ENCODE measurements at regions of chr6 and their contacts with region 1.

Region 1: GRCh38 chr6:127900935-127901334 is at the start of gene THEMIS:
- DNase-seq: peak; percentile 66 to 73 (median 69)
- H3K4me3 ChIP-seq: peak within 1 kb of the TSS; percentile 66 to 72
- H3K4me3 Mint-ChIP-seq: peak within 1 kb of the TSS; percentile 98 to 100 (median 99)
- H3K27ac ChIP-seq: peak within 1 kb of the TSS; percentile 73
- H3K27ac Mint-ChIP-seq: peak within 1 kb of the TSS; percentile 90 to 98 (median 96)
- H3K4me1 ChIP-seq: peaks cover 68% of the 10 kb centered on the region
- H3K4me1 Mint-ChIP-seq: peaks cover 41 to 70% (median 56%) of the 10 kb centered on the region in 4 donors
- H3K27me3 ChIP-seq: no peaks in the 10 kb centered on the region
- H3K27me3 Mint-ChIP-seq: no peaks in the 10 kb centered on the region
- total RNA-seq, gene THEMIS: 58.1 to 58.7 TPM

Region 2: DNA sequence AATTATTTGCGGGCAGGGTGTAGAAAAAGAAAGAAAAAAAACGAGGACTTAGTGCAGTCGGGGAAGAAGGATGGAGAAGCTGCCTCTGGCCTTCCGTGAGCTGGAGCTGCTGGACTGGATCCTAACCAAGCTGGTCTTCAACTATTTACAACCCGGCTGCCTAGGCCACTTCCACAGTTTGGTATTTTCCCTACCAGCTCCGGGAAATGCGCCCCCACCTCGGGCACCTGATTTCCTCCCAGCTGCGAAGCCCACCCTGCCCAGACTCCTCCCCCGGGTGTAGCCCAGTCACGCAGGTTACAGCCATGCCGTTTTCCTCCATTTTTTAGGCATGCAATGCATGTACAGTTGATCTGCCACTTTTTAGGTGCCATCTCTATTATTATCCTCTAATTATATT is 21.2 kb before region 1 on chr6:
- CTCF ChIA-PET with region 1: no interaction called
- POLR2A ChIA-PET with region 1: interaction called, 12 read pairs
- intact Hi-C with region 1: no loop called
- DNase-seq: no peak
- H3K4me3 ChIP-seq: no peak overlapping the region
- H3K4me3 Mint-ChIP-seq: peak overlapping the region in 7 of 8 donors; percentile 43 to 87 (median 61)
- H3K27ac ChIP-seq: no peak overlapping the region
- H3K27ac Mint-ChIP-seq: peak overlapping the region; percentile 36 to 87 (median 81)
- H3K4me1 ChIP-seq: peaks cover 89% of the 10 kb centered on the region
- H3K4me1 Mint-ChIP-seq: peaks cover 52 to 77% (median 66%) of the 10 kb centered on the region in 4 donors
- H3K27me3 ChIP-seq: no peaks in the 10 kb centered on the region
- H3K27me3 Mint-ChIP-seq: no peaks in the 10 kb centered on the region

Region 3: GRCh38 chr6:127951172-127951917 is 50.4 kb after region 1 on chr6:
- CTCF ChIA-PET with region 1: interaction called, 3 read pairs
- POLR2A ChIA-PET with region 1: interaction called, 5 read pairs
- intact Hi-C with region 1: loop called (anchors 5 kb)
- DNase-seq: peak in 4 of 5 donors; percentile 61 to 73 (median 66)
- H3K4me3 ChIP-seq: peak overlapping the region; percentile 4 to 12
- H3K4me3 Mint-ChIP-seq: peak overlapping the region; percentile 69 to 88 (median 81)
- H3K27ac ChIP-seq: peak overlapping the region; percentile 14
- H3K27ac Mint-ChIP-seq: peak overlapping the region; percentile 83 to 91 (median 88)
- H3K4me1 ChIP-seq: peaks cover 66% of the 10 kb centered on the region
- H3K4me1 Mint-ChIP-seq: peaks cover 38 to 69% (median 55%) of the 10 kb centered on the region in 4 donors
- H3K27me3 ChIP-seq: no peaks in the 10 kb centered on the region
- H3K27me3 Mint-ChIP-seq: no peaks in the 10 kb centered on the region

Region 4: GRCh38 chr6:127971945-127972391 is 71.0 kb after region 1 on chr6:
- CTCF ChIA-PET with region 1: interaction called, 10 read pairs
- POLR2A ChIA-PET with region 1: interaction called, 29 read pairs
- intact Hi-C with region 1: loop called (anchors 1 kb)
- DNase-seq: peak; percentile 81 to 89 (median 83)
- H3K4me3 ChIP-seq: peak overlapping the region in 1 of 2 donors; percentile 36
- H3K4me3 Mint-ChIP-seq: peak overlapping the region; percentile 87 to 95 (median 90)
- H3K27ac ChIP-seq: peak overlapping the region; percentile 71
- H3K27ac Mint-ChIP-seq: peak overlapping the region; percentile 92 to 98 (median 98)
- H3K4me1 ChIP-seq: peaks cover 64% of the 10 kb centered on the region
- H3K4me1 Mint-ChIP-seq: peaks cover 41 to 56% (median 46%) of the 10 kb centered on the region in 4 donors
- H3K27me3 ChIP-seq: no peaks in the 10 kb centered on the region
- H3K27me3 Mint-ChIP-seq: no peaks in the 10 kb centered on the region

Measured in CD4-positive, alpha-beta memory T cell (primary cell).